B cell (primary cell): ENCODE measurements at regions of chr14 and their contacts with region 1.

Region 1: GRCh38 chr14:23294734-23295561 is 7.7 kb downstream of the PPP1R3E start:
- DNase-seq: peak; percentile 83
- ATAC-seq: peak; percentile 86
- H3K4me3 ChIP-seq: no peak overlapping the region
- H3K4me3 Mint-ChIP-seq: peak overlapping the region; percentile 27
- H3K27ac ChIP-seq: no peak overlapping the region
- H3K27ac Mint-ChIP-seq: peak overlapping the region; percentile 47
- H3K4me1 ChIP-seq: peaks cover 5 to 12% of the 10 kb centered on the region in 2 donors
- H3K4me1 Mint-ChIP-seq: peaks cover 25% of the 10 kb centered on the region
- H3K27me3 ChIP-seq: no peaks in the 10 kb centered on the region
- H3K27me3 Mint-ChIP-seq: no peaks in the 10 kb centered on the region
- CTCF ChIP-seq: peak; percentile 85

Region 2: DNA sequence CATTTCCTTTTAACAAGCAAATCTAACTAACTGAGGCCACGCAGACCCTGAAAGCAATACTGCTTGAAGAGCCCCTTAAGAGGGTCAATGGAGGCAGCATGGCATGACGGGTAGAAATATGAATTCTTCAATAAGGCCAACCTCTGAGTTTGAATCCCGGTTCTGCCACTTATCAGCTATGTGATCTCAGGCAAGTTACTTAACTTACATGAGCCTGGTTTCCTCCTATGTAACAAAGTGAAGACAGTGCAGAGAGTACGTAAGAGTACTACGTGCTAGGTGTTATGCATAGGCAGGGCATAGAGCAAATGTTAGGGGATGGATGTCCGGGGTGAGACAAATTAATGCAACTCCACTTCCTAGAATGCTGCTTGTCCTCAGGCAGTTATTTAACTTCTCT is 13.7 kb before region 1 on chr14:
- CTCF ChIA-PET with region 1: interaction called, 56 read pairs
- POLR2A ChIA-PET with region 1: interaction called, 4 read pairs
- intact Hi-C with region 1: loop called (anchors 1 kb)
- DNase-seq: no peak
- ATAC-seq: no peak
- H3K4me3 ChIP-seq: no peak overlapping the region
- H3K4me3 Mint-ChIP-seq: no peak overlapping the region
- H3K27ac ChIP-seq: no peak overlapping the region
- H3K27ac Mint-ChIP-seq: no peak overlapping the region
- H3K4me1 ChIP-seq: peaks cover 8 to 10% of the 10 kb centered on the region in 2 donors
- H3K4me1 Mint-ChIP-seq: peaks cover 14% of the 10 kb centered on the region
- H3K27me3 ChIP-seq: no peaks in the 10 kb centered on the region
- H3K27me3 Mint-ChIP-seq: no peaks in the 10 kb centered on the region
- CTCF ChIP-seq: no peak

Region 3: GRCh38 chr14:23306410-23307145 is 11.6 kb after region 1 on chr14 and contains the start of gene BCL2L2:
- CTCF ChIA-PET with region 1: interaction called, 12 read pairs
- POLR2A ChIA-PET with region 1: no interaction called
- intact Hi-C with region 1: no loop called
- DNase-seq: peak; percentile 57
- ATAC-seq: no peak
- H3K4me3 ChIP-seq: peak within 1 kb of the TSS in 4 of 5 experiments; percentile 31 to 59 (median 46)
- H3K4me3 Mint-ChIP-seq: peak within 1 kb of the TSS; percentile 81
- H3K27ac ChIP-seq: peak within 1 kb of the TSS; percentile 54 to 78
- H3K27ac Mint-ChIP-seq: peak within 1 kb of the TSS; percentile 85
- H3K4me1 ChIP-seq: peaks cover 14 to 30% of the 10 kb centered on the region in 2 donors
- H3K4me1 Mint-ChIP-seq: peaks cover 33% of the 10 kb centered on the region
- H3K27me3 ChIP-seq: no peaks in the 10 kb centered on the region
- H3K27me3 Mint-ChIP-seq: no peaks in the 10 kb centered on the region
- CTCF ChIP-seq: no peak
- total RNA-seq, gene BCL2L2: 12.9 and 17.8 TPM in 2 replicates